ENCODE measurements at regions of chr10 and their contacts with region 1.

Region 1: DNA sequence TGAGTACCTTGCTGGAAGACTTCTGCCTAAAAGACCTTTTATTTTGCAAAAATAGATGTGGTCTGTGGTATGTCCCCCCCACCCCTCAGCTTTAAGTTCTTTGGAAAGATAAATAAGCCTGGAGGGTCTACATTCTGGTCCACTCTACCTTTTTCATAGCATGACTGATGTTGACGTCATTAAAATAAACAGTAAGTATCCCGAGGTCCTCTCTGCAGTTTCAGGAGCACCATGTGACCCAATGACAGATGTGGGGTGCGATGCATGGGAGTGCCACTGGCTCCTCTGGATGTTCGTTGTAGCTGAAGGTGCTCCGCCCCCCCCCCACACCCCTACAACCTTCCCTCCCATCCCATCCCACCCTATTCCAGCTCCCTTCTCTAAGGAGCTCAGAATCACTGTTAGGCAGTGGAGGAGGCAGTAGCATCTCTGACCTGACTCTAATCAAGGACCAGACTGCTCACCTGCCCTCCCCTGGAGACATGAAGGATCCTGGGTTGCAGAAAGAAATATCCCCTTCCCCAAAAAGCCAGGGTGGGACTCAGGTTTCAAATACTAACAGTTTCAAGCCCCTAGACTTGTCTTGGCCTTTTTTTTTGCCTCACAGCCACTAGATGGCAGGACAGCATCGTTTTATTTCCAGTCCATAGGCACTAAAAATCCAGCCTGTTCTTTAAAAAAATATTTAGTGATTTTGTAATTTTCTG is 25.1 kb downstream of the CASP7 start:
- DNase-seq: no peak
- H3K4me3 ChIP-seq: no peak overlapping the region
- H3K27ac ChIP-seq: no peak overlapping the region
- H3K4me1 ChIP-seq: peaks cover 0 to 19% (median 3%) of the 10 kb centered on the region in 4 donors
- H3K27me3 ChIP-seq: no peaks in the 10 kb centered on the region
- CTCF ChIP-seq: peak; percentile 62 to 68 (median 64)
- EP300 ChIP-seq: no peak
- POLR2A ChIP-seq: no peak

Region 2: GRCh38 chr10:113716109-113716910 is 11.5 kb after region 1 on chr10:
- in situ Hi-C with region 1: no loop called
- intact Hi-C with region 1: no loop called
- DNase-seq: no peak
- H3K4me3 ChIP-seq: no peak overlapping the region
- H3K27ac ChIP-seq: no peak overlapping the region
- H3K4me1 ChIP-seq: peaks cover 3 to 18% (median 11%) of the 10 kb centered on the region in 4 donors
- H3K27me3 ChIP-seq: no peaks in the 10 kb centered on the region
- CTCF ChIP-seq: no peak
- EP300 ChIP-seq: no peak
- POLR2A ChIP-seq: no peak

Region 3: GRCh38 chr10:113891476-113891875 is 186.7 kb after region 1 on chr10:
- in situ Hi-C with region 1: no loop called
- intact Hi-C with region 1: no loop called
- DNase-seq: no peak
- H3K4me3 ChIP-seq: no peak overlapping the region
- H3K27ac ChIP-seq: no peak overlapping the region
- H3K4me1 ChIP-seq: peaks cover 0 to 4% (median 0%) of the 10 kb centered on the region in 4 donors
- H3K27me3 ChIP-seq: no peaks in the 10 kb centered on the region
- CTCF ChIP-seq: no peak
- EP300 ChIP-seq: no peak
- POLR2A ChIP-seq: no peak

Region 4: GRCh38 chr10:114073395-114074186 is 368.8 kb after region 1 on chr10:
- in situ Hi-C with region 1: no loop called
- intact Hi-C with region 1: no loop called
- DNase-seq: no peak
- H3K4me3 ChIP-seq: no peak overlapping the region
- H3K27ac ChIP-seq: no peak overlapping the region
- H3K4me1 ChIP-seq: no peaks in the 10 kb centered on the region
- H3K27me3 ChIP-seq: no peaks in the 10 kb centered on the region
- CTCF ChIP-seq: no peak
- EP300 ChIP-seq: no peak
- POLR2A ChIP-seq: no peak

Region 5: DNA sequence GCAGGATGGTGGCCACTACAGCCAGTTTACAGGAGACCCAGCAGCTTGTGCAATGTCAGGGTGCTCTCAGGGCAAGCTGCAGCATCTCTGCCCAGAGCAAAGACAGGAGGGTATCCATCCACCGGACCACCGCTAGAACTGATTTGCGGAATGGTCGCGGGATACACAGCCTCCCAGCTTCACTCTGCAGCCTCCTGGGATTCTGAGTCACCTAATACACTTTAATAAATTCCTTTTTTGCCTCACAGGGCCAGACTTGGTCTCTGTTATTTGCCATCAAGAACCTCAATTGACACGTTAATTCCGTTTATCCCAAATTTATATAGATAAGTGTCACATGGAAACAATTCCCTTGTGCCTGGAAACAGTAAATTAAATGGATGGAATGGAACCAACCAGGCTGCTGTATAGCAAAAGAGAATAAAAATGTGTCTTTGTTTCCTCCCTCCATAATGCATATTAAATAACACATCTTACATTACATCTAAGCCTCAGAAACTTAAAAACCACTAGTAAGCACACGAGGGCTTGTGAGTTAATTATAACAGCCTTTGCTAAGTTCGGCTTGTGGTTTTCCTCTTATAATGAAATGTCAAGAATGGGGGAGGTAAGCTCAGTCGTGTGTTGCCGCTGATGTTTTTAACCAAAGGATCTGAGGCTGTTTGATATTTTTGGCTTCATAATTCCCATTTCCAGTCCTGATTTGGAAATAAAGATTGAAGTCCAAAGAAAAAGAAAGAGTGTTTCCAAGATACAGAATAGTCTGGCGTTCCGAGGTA is 391.0 kb after region 1 on chr10:
- in situ Hi-C with region 1: loop called (anchors 10 kb)
- intact Hi-C with region 1: no loop called
- DNase-seq: no peak
- H3K4me3 ChIP-seq: no peak overlapping the region
- H3K27ac ChIP-seq: no peak overlapping the region
- H3K4me1 ChIP-seq: peaks cover 0 to 8% (median 2%) of the 10 kb centered on the region in 4 donors
- H3K27me3 ChIP-seq: no peaks in the 10 kb centered on the region
- CTCF ChIP-seq: no peak
- EP300 ChIP-seq: no peak
- POLR2A ChIP-seq: no peak

Measured in transverse colon (tissue), 4 donors.